ENCODE measurements at regions of chr13 and their contacts with region 1.

Region 1: DNA sequence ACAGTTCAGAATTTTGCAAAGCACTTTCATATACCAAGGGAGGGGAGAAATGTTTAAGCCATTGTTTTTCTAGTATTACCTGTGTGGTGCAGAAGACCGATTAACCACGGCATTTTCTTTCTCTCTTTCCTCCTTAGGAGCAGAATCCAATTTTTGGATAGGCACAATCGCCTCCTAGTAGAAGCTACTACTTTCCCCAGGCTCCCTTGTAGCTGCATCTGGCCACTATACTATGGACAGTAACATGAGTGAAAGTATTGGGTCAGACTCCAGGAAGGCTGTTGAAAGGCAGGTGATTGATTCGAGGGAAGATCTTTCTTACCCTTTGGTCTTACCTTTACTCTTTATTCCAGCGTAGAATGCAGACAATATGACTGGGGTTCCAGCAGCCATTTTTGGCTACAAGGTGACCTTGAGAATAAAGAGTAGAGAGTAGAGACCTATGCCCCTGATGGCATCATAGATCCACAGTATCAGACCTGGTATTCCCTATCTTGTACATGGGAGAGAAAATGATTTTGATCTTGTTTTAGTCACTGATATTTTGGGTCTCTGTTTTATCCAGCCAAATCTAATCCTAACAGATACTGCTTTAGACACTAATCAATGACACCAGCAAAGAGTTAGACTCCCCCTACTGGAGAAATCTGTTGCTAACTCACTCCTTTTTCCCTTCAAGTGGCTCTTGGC is 77.0 kb downstream of the LRRC63 start:
- DNase-seq: no peak
- H3K4me3 ChIP-seq: no peak overlapping the region
- H3K27ac ChIP-seq: no peak overlapping the region
- H3K27me3 ChIP-seq: peaks cover 10% of the 10 kb centered on the region
- CTCF ChIP-seq: peak; percentile 78

Region 2: DNA sequence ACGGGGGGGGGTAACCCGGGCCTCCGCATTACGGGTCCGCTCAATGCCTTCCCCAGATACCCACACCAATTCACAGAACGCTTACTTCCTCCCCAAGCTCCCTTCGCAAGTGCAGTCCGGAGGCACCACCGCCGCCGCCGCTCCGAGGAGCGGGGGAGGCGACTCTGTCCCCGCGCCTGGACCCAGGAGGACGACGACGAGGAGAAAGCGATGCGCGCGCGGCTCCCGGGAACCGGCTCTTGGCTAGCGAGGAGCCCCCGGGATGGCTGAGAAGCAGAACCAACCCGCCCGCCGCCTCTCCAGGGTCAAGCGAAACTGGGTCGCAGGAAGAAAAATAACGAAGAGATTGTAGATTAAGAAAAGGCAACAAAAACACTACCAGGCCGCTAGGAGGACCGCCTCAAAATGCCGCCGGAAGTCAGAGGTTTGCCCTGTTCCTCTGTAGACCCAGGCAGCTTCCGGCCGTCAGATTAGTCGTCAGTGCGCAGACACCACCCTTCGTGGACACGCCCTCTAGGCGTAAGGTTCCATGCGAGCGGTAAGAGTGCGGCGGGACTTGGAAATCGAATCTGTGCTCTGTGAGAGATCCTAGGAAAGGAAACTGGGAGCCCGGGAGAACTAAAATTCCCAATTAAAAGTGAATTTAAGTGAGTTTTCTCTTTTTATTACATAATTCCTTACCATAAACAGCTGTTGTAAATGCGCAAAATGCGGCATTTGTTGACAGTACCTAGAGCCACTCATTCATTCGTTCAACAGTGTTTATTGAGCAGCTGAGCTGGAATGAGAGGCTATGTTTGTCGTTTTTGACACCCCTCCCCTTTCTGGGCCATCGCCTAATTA is 236.2 kb before region 1 on chr13 and contains the start of gene ZC3H13:
- CTCF ChIA-PET with region 1: no interaction called
- POLR2A ChIA-PET with region 1: no interaction called
- DNase-seq: peak; percentile 88
- H3K4me3 ChIP-seq: peak within 1 kb of the TSS; percentile 94
- H3K27ac ChIP-seq: peak within 1 kb of the TSS; percentile 83
- H3K27me3 ChIP-seq: no peaks in the 10 kb centered on the region
- CTCF ChIP-seq: peak; percentile 50
- polyA plus RNA-seq, gene ZC3H13: 10.6 and 14.0 TPM in 2 replicates

Region 3: GRCh38 chr13:46278474-46278873 is 10.2 kb before region 1 on chr13:
- CTCF ChIA-PET with region 1: interaction called, 10 read pairs
- POLR2A ChIA-PET with region 1: no interaction called
- DNase-seq: no peak
- H3K4me3 ChIP-seq: no peak overlapping the region
- H3K27ac ChIP-seq: no peak overlapping the region
- H3K27me3 ChIP-seq: peaks cover 2% of the 10 kb centered on the region
- CTCF ChIP-seq: no peak

Measured in AG04450 (cell line).